Activated naive CD8-positive, alpha-beta T cell treated with anti-CD3 and anti-CD28 coated beads, Interleukin-2, amount 10 ng/mL, durations not matched to agents 7 days and 5 days (primary cell): ENCODE measurements at regions of chr15 and their contacts with region 1.

Region 1: DNA sequence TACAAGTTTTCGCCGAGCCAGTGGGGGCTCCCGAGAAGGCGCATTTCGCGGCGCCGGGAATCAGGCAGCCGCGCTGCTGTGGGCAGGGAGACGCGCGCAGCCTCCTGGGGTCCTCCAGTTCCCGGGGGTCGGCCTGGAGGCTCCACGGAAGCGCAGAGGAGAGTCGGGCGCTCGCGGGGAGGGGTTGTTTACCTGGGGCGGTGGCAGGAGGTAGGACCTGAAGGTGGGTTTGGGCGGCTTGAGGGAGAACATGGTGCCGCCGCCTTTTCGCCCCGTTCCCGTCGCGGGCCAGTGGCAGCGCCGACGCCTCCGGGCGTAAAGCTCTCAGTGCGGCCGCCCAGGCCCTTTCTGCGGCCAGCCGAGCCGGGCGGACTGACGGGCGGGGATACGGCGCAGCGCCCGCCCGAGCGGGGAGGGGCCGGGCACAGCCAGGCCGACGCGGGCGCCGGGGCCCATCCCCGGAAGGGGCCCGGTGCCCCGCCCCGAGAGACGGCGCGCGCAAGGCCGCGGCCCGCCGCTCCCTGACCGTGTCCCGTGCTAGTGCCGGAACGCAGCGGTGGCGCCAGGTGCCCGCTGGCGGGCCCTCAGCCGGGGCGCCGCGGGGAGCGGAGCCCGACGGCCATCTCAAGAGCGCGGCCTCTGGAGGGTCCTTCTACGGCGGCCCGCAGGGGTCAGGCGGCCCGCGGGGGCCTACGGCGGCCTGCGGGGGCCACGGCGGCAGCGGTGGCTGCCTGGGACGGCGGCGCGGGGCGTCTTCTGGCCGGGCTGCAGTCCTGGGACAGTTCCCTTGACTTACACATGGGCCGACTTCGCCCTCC is at the start of gene MTMR10:
- DNase-seq: peak; percentile 91
- ATAC-seq: peak; percentile 92
- H3K4me3 Mint-ChIP-seq: peak within 1 kb of the TSS; percentile 94
- H3K27ac Mint-ChIP-seq: peak within 1 kb of the TSS; percentile 93
- H3K4me1 Mint-ChIP-seq: peaks cover 22% of the 10 kb centered on the region
- H3K27me3 Mint-ChIP-seq: peaks cover 2% of the 10 kb centered on the region
- total RNA-seq, gene MTMR10: 29.3 to 32.2 TPM

Region 2: DNA sequence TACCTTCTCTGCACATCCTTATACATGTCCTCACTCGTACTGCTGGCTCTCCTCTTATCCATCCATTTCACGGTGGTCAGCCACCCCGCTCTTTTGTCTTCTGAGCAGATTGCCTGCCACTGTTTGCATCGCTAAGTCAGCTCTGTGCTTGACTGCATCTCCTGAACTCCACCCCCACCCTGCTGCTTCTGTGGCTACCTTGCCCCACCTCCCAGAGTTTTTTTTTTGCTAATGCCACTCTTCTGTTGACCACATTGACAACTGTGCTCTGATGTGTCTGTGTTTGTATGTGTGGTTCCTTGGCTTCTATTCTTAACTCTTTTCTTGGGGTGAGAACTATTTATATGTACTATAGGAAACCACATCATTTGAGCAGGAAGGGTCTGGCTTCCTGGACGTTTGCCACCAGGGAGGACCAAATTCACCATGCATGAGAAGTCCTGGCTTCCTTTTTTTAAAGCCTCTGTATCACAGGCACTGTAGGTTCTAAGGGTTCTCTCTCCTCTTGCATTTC is 12.8 kb after region 1 on chr15:
- POLR2A ChIA-PET with region 1: interaction called, 25 read pairs
- DNase-seq: peak; percentile 41
- ATAC-seq: peak; percentile 86
- H3K4me3 Mint-ChIP-seq: peak overlapping the region; percentile 79
- H3K27ac Mint-ChIP-seq: peak overlapping the region; percentile 76
- H3K4me1 Mint-ChIP-seq: peaks cover 21% of the 10 kb centered on the region
- H3K27me3 Mint-ChIP-seq: peaks cover 32% of the 10 kb centered on the region

Region 3: GRCh38 chr15:31013538-31014228 is 22.2 kb after region 1 on chr15:
- POLR2A ChIA-PET with region 1: interaction called, 20 read pairs
- DNase-seq: no peak
- ATAC-seq: peak; percentile 95
- H3K4me3 Mint-ChIP-seq: peak overlapping the region; percentile 38
- H3K27ac Mint-ChIP-seq: peak overlapping the region; percentile 67
- H3K4me1 Mint-ChIP-seq: peaks cover 21% of the 10 kb centered on the region
- H3K27me3 Mint-ChIP-seq: peaks cover 2% of the 10 kb centered on the region